RWPE1 (cell line): ENCODE measurements at regions of chr1 and their contacts with region 1.

Region 1: GRCh38 chr1:145845514-145846161 is at the start of gene NUDT17:
- DNase-seq: peak; percentile 77
- H3K27ac ChIP-seq: peak within 1 kb of the TSS; percentile 66
- CTCF ChIP-seq: peak; percentile 89

Region 2: DNA sequence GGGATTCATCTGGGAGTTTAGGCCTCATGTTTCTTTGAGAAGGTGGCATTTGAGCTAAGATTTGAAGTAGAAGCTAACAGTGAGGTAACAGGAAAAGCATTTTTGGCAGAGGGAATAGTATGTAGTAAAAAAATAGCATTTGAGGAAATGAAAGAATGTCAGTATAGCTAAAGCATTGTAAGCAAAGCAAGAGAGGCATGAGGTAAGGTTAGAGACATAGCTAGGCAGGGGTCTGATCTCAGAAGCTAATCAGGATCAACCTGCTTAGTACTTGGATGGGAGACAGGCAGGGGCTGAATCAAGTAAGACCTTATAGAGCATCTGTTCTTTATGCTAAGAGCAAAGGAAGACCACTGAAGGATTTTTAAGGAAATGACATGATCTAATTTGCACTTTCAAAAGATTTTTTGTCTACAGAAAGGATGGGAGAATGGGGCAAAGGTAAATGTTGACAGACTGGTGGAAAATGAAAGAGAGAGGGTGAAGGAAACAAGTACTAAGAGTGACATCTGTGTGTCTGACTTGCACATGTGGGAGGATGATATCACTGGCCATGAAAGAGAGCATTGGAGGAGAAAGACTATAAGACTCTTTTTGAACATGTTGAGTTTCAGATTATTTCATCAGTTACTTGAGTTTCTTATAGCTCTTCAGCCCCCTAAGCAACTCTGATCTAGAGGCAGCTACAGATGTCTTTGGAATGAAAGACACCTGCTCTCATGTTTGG is 17.5 kb before region 1 on chr1:
- CTCF ChIA-PET with region 1: interaction called, 38 read pairs
- POLR2A ChIA-PET with region 1: no interaction called
- DNase-seq: no peak
- H3K27ac ChIP-seq: no peak overlapping the region
- CTCF ChIP-seq: no peak

Region 3: DNA sequence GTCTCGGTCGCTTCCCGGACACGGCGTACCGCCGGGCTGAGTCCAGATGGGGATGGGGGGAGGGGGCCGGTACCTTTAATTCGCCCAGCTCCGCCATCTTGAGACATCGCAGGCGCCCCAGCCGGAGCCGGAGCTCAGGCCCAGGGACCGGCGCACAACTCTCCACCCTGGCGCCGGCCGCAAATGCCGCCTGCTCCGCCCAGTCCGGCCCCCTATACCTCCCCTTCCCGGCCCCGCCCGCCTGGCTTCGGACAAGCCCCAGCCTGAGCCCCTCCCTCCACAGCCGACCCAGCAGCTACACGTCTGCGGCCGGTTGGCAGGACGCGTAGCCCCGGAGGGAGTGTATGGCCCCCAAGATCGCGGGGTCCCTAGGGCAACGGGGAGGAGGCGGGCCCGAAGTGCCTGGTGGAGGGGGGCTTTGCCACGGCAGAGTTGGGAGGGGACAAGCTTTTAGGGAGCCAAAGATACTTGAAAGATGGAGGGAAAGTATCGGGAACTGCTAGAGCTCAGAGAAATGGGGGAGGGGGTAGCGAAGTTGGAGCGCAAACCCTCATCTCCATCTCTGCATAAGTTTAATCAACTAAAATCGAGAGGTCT is 13.4 kb after region 1 on chr1 and contains the start of gene PIAS3:
- CTCF ChIA-PET with region 1: interaction called, 51 read pairs
- POLR2A ChIA-PET with region 1: interaction called, 4 read pairs
- DNase-seq: peak; percentile 99
- H3K27ac ChIP-seq: peak within 1 kb of the TSS; percentile 89
- CTCF ChIP-seq: no peak